Head of caudate nucleus (tissue), 42 donors: ENCODE measurements at regions of chr12 and their contacts with region 1.

Region 1: DNA sequence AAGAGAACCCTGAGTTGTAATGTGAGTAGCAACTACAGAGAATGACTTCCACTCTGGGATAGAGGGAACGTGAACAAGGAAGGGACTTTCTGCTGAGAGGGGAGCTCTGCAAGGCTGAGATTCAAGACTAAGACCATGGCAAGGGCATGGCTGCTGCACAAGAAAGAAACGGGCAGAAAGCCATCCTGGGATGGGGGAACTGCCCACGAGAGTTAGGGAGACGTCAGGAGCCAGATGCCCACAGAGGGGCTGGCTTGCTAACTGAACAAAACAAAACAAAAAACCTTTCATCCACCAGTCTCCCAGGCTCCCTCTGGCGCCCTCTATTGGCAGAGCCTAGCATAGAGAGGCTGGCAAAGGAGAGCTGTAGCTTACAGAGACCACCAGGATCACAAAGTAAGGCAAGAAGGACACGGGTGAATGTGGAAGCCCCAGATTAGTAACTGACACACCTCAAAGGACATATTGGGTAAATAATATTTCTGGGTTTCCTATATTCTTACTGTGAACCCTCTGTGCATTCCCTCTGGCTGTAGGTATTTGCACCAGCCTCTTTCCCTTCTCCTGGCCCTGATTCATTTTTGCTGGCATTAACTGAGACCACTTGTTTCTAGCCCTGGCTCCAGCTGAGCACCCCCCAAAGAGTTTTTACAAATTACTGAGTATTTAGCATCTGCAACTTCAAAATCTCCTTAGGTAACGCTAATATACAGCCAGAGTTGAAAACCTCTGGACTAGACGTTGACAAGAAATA is 338.3 kb downstream of the EMP1 start:
- DNase-seq: peak; percentile 54 to 94 (median 87)

Region 2: DNA sequence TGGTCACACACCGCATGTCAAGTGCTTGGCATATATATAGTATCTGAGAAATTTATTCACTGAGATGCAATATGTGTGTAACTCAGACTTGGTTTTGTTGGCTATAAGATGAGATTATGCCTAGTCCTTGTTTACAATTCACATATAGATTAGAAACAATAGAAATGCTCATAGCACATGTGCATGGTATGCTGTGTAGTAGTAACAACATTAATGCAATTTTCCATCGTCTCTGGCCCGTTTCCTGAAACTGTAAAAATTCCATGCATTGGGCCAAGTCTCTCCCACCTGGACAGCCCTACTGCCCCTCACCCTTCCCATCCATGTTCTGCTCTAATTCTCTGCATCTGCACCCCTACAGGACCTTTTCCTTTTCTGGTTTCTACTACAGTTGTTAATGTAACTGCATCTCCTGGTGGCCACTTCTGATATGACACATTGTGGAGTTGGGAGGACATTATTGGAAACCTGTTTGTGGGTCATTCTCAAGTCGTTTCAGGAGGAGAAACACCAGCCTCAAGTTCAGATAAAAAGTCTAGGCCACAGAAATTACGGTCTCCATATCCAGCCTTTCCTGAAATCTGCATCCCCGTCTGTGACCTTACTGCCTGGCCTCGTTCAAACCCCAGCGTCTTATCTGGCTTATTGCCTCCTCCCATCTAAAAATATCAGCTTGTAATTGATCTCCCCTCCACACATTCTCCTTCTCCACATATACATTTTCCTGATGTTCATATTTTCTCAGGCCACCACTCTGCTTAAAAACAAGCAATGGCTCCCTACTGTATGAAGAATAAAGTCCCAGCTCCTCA is 300.8 kb before region 1 on chr12:
- intact Hi-C with region 1: no loop called
- DNase-seq: peak in 7 of 42 donors; percentile 4 to 46 (median 14)

Region 3: GRCh38 chr12:13362260-13362841 is 172.5 kb before region 1 on chr12:
- intact Hi-C with region 1: loop called (anchors 10 kb)
- DNase-seq: peak in 41 of 42 donors; percentile 34 to 87 (median 62)

Region 4: DNA sequence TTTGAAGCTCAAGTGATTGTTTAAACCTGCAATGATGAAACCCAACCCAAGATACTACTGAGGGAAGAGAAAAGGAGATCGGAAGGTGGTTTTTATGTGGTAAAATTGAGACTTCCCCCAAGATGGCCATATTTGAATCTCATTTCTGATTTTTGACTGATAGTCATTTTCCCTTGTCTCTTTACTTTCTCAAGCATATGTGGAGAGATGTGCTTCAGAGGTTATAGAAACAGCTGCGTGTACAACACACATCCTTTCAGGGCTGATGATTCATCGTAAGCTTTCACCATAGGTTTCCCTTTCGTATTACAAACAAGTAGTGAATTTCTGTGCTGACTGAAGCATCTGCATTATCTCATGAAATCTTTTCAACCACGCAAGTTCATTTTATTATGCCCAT is 62.1 kb before region 1 on chr12:
- intact Hi-C with region 1: loop called (anchors 2 kb)
- DNase-seq: peak in 1 of 42 donors; percentile 22

Region 5: DNA sequence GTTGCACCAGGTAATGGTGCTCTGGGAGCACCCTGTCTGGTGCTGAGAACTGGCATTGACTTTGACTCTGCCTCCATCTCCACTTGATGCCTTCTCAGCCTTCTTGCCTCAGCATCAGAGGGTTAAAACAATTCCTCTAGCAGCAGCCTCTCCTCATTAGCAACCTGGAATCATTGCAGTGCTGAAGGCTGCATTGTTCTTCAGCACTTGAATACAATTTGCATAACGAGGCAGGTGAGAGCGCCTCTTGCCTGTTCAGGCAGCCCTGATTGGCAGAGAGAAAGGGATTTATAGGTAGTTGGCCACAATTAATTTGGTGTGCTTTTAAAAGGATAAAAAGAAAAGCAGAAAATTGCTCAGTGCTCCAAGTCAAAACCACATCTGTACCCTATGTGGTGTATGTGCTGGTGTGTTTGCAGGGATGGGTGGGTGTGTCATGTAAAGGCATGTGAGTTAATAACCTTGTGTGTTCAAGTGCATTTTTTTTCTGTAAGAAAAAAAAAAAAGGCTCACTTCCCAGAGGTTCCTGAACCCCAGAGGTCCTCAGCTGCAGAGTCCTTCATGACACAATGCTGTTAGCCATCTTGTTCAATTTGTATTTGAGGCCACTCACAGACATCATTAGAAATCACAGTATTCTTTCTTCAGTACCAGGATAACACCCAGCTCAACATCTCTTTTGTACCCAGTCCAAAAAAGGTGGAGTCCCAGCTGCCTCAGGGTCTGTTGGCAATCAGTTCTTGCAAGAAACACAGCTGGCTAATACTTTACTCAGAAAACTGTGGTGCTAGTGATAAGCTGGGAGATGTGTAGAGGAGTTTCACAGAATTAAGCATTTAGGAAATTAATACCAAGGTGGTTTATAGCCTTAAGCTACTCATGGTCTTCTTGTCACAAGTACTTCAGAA is 61.0 kb after region 1 on chr12:
- intact Hi-C with region 1: no loop called
- DNase-seq: peak in 19 of 42 donors; percentile 10 to 70 (median 32)

Region 6: GRCh38 chr12:14066051-14066450 is 531.2 kb after region 1 on chr12:
- intact Hi-C with region 1: no loop called
- DNase-seq: no peak